ENCODE measurements at regions of chr1 and their contacts with region 1.

Region 1: GRCh38 chr1:205983925-205984725 is 19.1 kb downstream of the RAB7B start:
- DNase-seq: peak; percentile 78
- ATAC-seq: peak; percentile 89

Region 2: DNA sequence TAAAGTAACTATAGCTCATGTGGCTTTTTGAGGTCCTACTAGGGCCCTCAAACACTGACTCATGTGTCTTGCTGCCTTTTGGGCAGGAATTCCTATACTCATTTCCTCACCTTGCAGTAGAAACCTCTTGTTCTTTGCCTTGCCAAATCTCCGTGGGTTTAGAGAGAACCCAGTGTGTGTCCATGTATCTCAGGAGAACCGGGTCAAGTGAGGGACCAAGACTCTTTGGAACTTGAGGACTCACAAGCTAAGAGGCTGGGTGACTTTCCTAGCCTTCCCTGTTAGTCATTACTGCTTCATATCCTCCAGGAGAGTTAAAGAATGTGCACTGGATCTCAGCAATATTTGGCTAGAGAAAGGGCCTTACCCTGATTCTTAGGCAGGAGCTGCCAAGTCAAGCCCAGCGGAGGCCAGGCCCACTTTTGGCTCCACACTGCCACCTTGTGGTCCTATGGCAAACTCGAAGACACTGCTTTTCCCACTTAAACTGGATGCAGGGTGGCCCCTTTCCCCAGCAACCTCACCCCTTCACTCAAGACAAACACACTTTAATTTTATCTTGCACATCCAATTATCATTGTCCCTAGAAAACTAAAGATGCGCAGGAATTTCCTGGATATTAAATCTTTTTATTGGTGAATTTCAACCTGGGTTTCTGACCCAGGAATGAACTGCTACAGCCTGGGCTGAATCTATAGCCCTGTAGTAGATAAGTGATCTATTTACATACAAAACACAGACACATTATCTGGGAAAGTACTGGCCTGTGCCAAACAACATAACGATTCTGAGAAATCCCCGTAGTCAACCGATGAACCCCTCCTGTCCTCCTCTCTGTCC is 122.4 kb after region 1 on chr1:
- intact Hi-C with region 1: loop called (anchors 2 kb)
- DNase-seq: peak; percentile 84
- ATAC-seq: peak; percentile 91